Heart right ventricle (tissue), 16 donors: ENCODE measurements at regions of chr12 and their contacts with region 1.

Region 1: GRCh38 chr12:89212339-89212771 is 139.9 kb downstream of the DUSP6 start:
- DNase-seq: peak; percentile 32 to 43
- ATAC-seq: peak; percentile 77 to 96 (median 95)
- H3K4me3 ChIP-seq: no peak overlapping the region
- H3K27ac ChIP-seq: peak overlapping the region; percentile 4 to 86 (median 57)
- H3K4me1 ChIP-seq: peaks cover 0 to 49% (median 12%) of the 10 kb centered on the region in 9 donors
- H3K27me3 ChIP-seq: no peaks in the 10 kb centered on the region
- CTCF ChIP-seq: no peak

Region 2: GRCh38 chr12:89019408-89020120 is 192.8 kb before region 1 on chr12:
- intact Hi-C with region 1: no loop called
- DNase-seq: peak; percentile 21 to 84
- ATAC-seq: peak; percentile 89 to 99 (median 96)
- H3K4me3 ChIP-seq: peak overlapping the region in 6 of 10 donors; percentile 25 to 45 (median 32)
- H3K27ac ChIP-seq: no peak overlapping the region
- H3K4me1 ChIP-seq: peaks cover 0 to 20% (median 10%) of the 10 kb centered on the region in 9 donors
- H3K27me3 ChIP-seq: peaks cover 0 to 4% (median 0%) of the 10 kb centered on the region in 7 donors
- CTCF ChIP-seq: peak; percentile 71 to 90 (median 84)

Region 3: DNA sequence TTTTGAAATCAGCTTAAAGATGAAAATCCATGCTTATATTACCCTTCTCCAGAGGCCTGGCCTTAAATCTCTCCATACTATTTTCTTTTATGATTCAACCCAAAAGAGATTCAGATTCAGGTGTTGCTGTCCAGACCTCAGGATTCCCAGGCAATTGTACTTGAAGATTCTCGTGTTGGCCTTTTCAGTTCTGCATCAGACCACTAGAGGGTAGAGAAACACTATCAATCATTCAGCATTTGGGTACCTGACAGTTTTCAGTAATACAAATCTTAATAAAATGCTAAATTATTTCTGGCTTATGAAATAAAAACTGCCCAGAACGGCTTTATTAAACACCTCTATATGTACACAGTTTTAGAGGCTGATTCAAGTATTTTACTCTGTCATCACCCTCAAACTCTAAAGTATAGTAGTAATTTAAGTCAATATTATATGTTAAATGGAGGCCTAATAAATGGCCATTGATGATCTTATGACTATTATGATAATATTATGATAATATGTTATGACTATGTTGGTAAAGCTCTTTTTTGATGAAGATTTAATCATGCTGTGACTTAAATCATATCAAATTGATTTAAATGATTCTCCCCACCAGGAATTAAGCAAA is 161.2 kb before region 1 on chr12:
- intact Hi-C with region 1: loop called in 1 of 10 experiments (anchors 10 kb)
- DNase-seq: peak in 1 of 2 donors; percentile 44
- ATAC-seq: peak in 6 of 8 donors; percentile 70 to 85 (median 79)
- H3K4me3 ChIP-seq: no peak overlapping the region
- H3K27ac ChIP-seq: no peak overlapping the region
- H3K4me1 ChIP-seq: peaks cover 0 to 7% (median 0%) of the 10 kb centered on the region in 9 donors
- H3K27me3 ChIP-seq: no peaks in the 10 kb centered on the region
- CTCF ChIP-seq: peak; percentile 83 to 97 (median 93)

Region 4: DNA sequence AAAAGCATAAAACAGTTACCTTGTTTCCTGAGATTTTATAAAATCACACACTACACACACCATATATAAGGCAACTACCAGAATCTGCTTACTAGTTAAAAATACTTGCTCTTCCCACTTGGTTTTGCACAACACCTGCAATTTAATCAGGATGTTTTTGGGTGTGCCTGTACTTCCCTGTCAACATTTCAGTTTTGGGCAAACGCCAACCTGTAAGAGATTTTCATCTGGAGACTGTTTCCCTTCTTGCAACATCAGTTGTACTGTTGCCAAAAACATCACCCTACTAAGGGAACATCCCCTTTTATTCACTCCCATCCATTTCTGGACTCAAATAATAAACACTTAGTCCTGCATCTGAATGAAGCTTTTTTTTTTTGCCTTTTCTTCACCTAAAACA is 32.4 kb before region 1 on chr12:
- intact Hi-C with region 1: loop called in 1 of 10 experiments (anchors 5 kb)
- DNase-seq: peak in 1 of 2 donors; percentile 74
- ATAC-seq: peak; percentile 67 to 95 (median 86)
- H3K4me3 ChIP-seq: no peak overlapping the region
- H3K27ac ChIP-seq: peak overlapping the region in 4 of 10 donors; percentile 10 to 36 (median 22)
- H3K4me1 ChIP-seq: peaks cover 0 to 40% (median 22%) of the 10 kb centered on the region in 9 donors
- H3K27me3 ChIP-seq: no peaks in the 10 kb centered on the region
- CTCF ChIP-seq: no peak